ENCODE measurements at regions of chrX and their contacts with region 1.

Region 1: DNA sequence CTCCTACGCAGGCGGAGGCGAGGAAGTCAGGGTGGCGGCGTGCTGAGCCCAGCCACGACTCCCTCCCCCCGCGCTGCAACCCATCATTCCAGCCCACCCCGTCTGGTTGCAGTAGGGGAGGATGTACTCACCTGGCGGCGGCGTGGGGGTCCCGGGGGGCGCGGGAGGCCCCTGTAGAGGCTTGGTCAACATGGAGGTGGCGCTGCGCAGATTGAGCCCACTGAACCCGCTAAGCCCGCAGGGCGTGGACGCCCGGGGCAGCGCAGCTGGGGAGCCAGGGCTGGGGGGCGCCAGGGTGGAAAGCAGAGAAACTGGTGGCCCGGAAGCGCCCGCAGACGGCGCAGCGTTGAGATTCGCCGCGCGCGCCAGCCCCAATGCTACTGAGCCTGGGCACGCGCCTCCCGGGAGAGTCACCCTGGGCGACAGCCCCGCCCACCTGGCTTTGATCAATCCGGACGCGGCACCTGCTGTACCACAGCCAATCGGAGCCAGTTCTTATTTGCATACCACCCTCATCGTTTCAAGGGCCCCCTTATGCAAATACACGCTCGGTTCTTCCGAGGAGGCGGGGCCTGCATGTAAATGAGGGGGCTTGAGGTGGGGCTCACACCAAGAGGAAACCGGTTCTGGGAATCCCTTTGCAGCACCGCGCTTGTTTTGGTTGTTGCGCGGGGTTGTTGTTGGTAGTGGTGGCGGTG is at the start of gene PIM2:
- DNase-seq: peak; percentile 83 to 96 (median 93)
- H3K4me3 ChIP-seq: peak within 1 kb of the TSS; percentile 94
- H3K4me3 Mint-ChIP-seq: peak within 1 kb of the TSS; percentile 95 to 98 (median 96)
- H3K27ac ChIP-seq: peak within 1 kb of the TSS; percentile 95
- H3K27ac Mint-ChIP-seq: peak within 1 kb of the TSS; percentile 74 to 97 (median 94)
- H3K4me1 ChIP-seq: peaks cover 52% of the 10 kb centered on the region
- H3K4me1 Mint-ChIP-seq: peaks cover 62 to 78% (median 66%) of the 10 kb centered on the region in 3 donors
- H3K27me3 ChIP-seq: no peaks in the 10 kb centered on the region
- H3K27me3 Mint-ChIP-seq: peaks cover 0 to 3% of the 10 kb centered on the region in 2 donors
- total RNA-seq, gene PIM2: 269 to 273 TPM

Region 2: DNA sequence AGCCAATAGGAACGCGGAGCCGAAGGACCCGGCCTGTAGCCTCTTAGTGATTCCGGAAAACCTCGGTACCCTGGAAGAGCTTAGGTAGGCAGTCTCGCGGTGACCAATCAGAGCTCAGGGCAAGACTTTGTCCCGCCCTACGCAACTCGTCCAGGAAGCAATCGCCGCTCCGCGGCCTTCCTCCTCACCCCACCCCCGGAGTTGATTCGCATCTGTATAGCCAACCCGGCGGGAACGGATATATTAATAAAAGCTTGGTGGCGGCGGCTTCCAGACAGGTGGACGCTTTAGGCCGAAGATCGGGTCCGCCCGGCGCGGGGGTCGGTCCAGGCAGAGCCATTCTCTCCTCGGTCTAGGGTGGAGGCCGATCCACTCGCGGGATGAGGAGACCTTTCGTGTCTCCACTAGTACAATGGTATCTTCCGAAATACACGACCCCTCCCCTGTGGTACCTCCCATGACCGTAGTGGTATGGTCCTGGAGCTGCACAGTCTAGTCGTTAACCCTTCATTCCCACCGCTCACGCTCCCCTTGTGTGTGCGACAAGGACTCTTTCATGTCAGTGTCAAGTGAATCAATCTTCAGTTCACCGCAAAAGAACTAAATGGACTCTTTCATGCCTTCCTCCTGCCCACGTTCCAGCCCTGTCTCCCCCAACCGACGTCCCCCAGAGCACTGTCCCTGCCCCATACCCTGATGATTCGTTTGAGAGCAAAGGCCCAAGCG is 181.4 kb before region 1 on chrX:
- CTCF ChIA-PET with region 1: no interaction called
- POLR2A ChIA-PET with region 1: no interaction called
- DNase-seq: peak; percentile 74 to 95 (median 88)
- H3K4me3 ChIP-seq: peak overlapping the region; percentile 66
- H3K4me3 Mint-ChIP-seq: peak overlapping the region; percentile 90 to 96 (median 93)
- H3K27ac ChIP-seq: peak overlapping the region; percentile 86
- H3K27ac Mint-ChIP-seq: peak overlapping the region; percentile 94 to 99 (median 96)
- H3K4me1 ChIP-seq: peaks cover 17% of the 10 kb centered on the region
- H3K4me1 Mint-ChIP-seq: peaks cover 17 to 23% (median 18%) of the 10 kb centered on the region in 3 donors
- H3K27me3 ChIP-seq: no peaks in the 10 kb centered on the region
- H3K27me3 Mint-ChIP-seq: peaks cover 0 to 7% of the 10 kb centered on the region in 2 donors

Region 3: GRCh38 chrX:48937054-48937907 is 18.5 kb after region 1 on chrX:
- CTCF ChIA-PET with region 1: interaction called, 10 read pairs
- POLR2A ChIA-PET with region 1: interaction called, 10 read pairs
- DNase-seq: peak; percentile 72 to 95 (median 92)
- H3K4me3 ChIP-seq: peak overlapping the region; percentile 58
- H3K4me3 Mint-ChIP-seq: peak overlapping the region; percentile 74 to 93 (median 86)
- H3K27ac ChIP-seq: peak overlapping the region; percentile 73
- H3K27ac Mint-ChIP-seq: peak overlapping the region; percentile 93 to 99 (median 94)
- H3K4me1 ChIP-seq: peaks cover 83% of the 10 kb centered on the region
- H3K4me1 Mint-ChIP-seq: peaks cover 79 to 92% (median 85%) of the 10 kb centered on the region in 3 donors
- H3K27me3 ChIP-seq: no peaks in the 10 kb centered on the region
- H3K27me3 Mint-ChIP-seq: peaks cover 0 to 5% of the 10 kb centered on the region in 2 donors

Measured in CD8-positive, alpha-beta memory T cell (primary cell).